Naive thymus-derived CD4-positive, alpha-beta T cell (primary cell): ENCODE measurements at regions of chr9 and their contacts with region 1.

Region 1: DNA sequence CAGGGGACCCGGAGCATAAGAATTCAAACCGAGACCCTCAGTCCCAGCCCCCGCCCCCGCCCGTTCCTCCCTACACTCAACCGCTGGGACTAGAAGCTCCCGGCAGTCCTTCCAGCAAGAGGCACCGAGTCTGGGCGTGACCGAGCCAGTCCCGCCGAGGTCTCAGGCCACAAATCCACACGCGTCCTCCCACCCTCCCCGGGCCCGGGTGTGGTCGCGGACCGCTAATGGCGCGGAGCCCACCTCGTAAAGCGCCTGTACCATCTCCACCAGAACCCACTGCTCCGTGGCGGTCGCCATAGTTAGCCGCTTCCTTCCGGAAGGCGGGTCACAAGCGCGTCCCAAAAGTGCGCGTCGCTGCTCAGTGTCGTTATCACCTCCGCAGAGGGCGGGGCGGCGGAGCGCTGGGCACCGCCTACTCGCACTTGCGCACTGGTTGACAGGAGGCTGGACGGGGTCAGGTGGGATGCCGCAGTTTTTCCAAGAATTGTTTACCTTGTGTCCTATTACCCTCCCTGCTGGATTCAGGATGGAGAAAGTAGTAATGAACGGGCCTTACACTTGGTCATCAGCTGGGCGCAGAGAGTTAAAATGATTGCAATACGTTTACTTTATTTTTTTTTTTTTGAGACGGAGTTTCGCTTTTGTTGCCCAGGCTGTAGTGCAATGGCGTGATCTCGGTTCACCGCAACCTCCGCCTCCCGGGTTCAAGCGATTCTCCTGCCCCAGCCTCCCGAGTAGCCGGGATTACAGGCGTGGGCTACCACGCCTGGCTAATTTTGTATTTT is at the start of gene SPTLC1:
- DNase-seq: peak; percentile 89 to 97 (median 94)
- ATAC-seq: peak; percentile 99
- H3K4me3 ChIP-seq: peak within 1 kb of the TSS; percentile 85
- H3K4me3 Mint-ChIP-seq: peak within 1 kb of the TSS; percentile 91 to 99 (median 97)
- H3K27ac ChIP-seq: peak within 1 kb of the TSS; percentile 96
- H3K27ac Mint-ChIP-seq: peak within 1 kb of the TSS; percentile 96 to 100 (median 98)
- H3K4me1 ChIP-seq: peaks cover 17 to 20% of the 10 kb centered on the region in 2 donors
- H3K4me1 Mint-ChIP-seq: peaks cover 17 to 51% (median 42%) of the 10 kb centered on the region in 7 donors
- H3K27me3 ChIP-seq: no peaks in the 10 kb centered on the region
- H3K27me3 Mint-ChIP-seq: peaks cover 0 to 2% (median 0%) of the 10 kb centered on the region in 5 donors
- total RNA-seq, gene SPTLC1: 45.6 to 64.0 (median 51.0) TPM

Region 2: DNA sequence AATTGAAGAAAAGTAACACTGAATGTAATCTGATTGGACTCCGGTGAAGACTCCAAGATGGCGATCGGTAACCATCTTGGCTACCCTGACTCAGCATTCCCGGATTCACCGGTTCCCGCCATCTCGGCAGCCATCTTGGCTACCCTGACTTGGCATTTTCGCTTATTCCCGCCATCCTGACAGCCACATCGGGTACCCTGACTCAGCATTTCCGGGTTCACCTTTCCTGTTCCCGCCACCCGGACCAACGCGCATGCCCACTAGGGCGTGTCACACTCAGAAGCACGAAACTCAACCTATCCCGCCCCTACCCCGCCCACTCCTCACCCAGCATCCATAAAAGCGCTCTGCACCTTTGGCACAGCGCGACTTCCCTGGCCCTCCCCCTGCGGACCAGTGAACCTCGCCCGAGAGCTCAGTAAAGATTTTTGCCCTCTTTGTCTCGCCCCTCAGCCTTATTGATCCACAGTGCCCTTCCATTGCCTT is 17.2 kb before region 1 on chr9:
- CTCF ChIA-PET with region 1: interaction called, 8 read pairs
- POLR2A ChIA-PET with region 1: interaction called, 3 read pairs
- intact Hi-C with region 1: loop called in 1 of 2 experiments (anchors 2 kb)
- DNase-seq: peak in 8 of 9 donors; percentile 4 to 64 (median 24)
- ATAC-seq: peak; percentile 52
- H3K4me3 ChIP-seq: no peak overlapping the region
- H3K4me3 Mint-ChIP-seq: peak overlapping the region; percentile 19 to 82 (median 50)
- H3K27ac ChIP-seq: no peak overlapping the region
- H3K27ac Mint-ChIP-seq: peak overlapping the region in 6 of 9 donors; percentile 26 to 82 (median 44)
- H3K4me1 ChIP-seq: no peaks in the 10 kb centered on the region
- H3K4me1 Mint-ChIP-seq: peaks cover 17 to 66% (median 64%) of the 10 kb centered on the region in 7 donors
- H3K27me3 ChIP-seq: no peaks in the 10 kb centered on the region
- H3K27me3 Mint-ChIP-seq: no peaks in the 10 kb centered on the region

Region 3: DNA sequence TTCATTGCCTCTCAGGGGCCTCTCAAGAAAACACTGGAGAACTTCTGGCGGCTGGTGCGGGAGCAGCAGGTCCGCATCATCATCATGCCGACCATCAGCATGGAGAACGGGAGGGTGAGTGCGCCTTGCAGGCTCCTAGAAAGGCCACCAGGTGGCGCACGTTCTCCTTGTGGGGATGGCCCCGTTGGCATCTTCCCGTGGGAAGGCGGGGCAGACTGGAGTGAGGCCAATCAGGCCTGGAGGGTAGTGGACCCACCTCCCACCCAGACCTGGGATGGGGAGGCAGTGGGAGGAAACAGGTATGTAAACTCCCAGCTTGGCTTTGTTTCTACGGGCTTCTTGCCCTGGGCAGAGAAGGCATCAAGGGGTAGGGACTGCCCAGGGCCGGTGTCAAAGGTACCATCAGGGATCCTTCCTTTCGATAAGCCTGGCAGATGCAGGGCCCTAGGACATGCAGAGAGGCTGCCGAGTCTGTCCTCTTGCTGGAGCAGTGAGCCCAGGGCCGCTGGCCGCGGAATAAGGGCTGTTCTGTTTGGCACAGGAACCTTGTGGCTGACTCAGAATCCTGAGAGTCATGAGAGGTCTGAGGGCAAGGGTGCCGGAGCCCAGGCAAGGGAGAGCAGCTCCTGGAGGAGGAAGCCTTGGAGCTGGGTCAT is 18.8 kb after region 1 on chr9:
- CTCF ChIA-PET with region 1: no interaction called
- POLR2A ChIA-PET with region 1: no interaction called
- intact Hi-C with region 1: loop called in 1 of 2 experiments (anchors 1 kb)
- DNase-seq: peak; percentile 42 to 79 (median 57)
- ATAC-seq: peak; percentile 85
- H3K4me3 ChIP-seq: no peak overlapping the region
- H3K4me3 Mint-ChIP-seq: peak overlapping the region in 8 of 10 donors; percentile 2 to 66 (median 45)
- H3K27ac ChIP-seq: no peak overlapping the region
- H3K27ac Mint-ChIP-seq: no peak overlapping the region
- H3K4me1 ChIP-seq: peaks cover 4 to 6% of the 10 kb centered on the region in 2 donors
- H3K4me1 Mint-ChIP-seq: peaks cover 0 to 15% (median 7%) of the 10 kb centered on the region in 7 donors
- H3K27me3 ChIP-seq: no peaks in the 10 kb centered on the region
- H3K27me3 Mint-ChIP-seq: peaks cover 23 to 36% (median 27%) of the 10 kb centered on the region in 5 donors

Region 4: GRCh38 chr9:92293452-92294296 is 178.4 kb after region 1 on chr9 and contains the start of gene IARS1:
- CTCF ChIA-PET with region 1: no interaction called
- POLR2A ChIA-PET with region 1: interaction called, 3 read pairs
- intact Hi-C with region 1: loop called (anchors 1 to 10 kb)
- DNase-seq: peak; percentile 97 to 100 (median 100)
- ATAC-seq: peak; percentile 98
- H3K4me3 ChIP-seq: peak within 1 kb of the TSS; percentile 61
- H3K4me3 Mint-ChIP-seq: peak within 1 kb of the TSS; percentile 85 to 99 (median 98)
- H3K27ac ChIP-seq: peak within 1 kb of the TSS; percentile 78
- H3K27ac Mint-ChIP-seq: peak within 1 kb of the TSS; percentile 95 to 100 (median 98)
- H3K4me1 ChIP-seq: peaks cover 17 to 33% of the 10 kb centered on the region in 2 donors
- H3K4me1 Mint-ChIP-seq: peaks cover 23 to 68% (median 62%) of the 10 kb centered on the region in 7 donors
- H3K27me3 ChIP-seq: no peaks in the 10 kb centered on the region
- H3K27me3 Mint-ChIP-seq: no peaks in the 10 kb centered on the region
- total RNA-seq, gene IARS1: 52.4 to 145 (median 97.7) TPM

Region 5: DNA sequence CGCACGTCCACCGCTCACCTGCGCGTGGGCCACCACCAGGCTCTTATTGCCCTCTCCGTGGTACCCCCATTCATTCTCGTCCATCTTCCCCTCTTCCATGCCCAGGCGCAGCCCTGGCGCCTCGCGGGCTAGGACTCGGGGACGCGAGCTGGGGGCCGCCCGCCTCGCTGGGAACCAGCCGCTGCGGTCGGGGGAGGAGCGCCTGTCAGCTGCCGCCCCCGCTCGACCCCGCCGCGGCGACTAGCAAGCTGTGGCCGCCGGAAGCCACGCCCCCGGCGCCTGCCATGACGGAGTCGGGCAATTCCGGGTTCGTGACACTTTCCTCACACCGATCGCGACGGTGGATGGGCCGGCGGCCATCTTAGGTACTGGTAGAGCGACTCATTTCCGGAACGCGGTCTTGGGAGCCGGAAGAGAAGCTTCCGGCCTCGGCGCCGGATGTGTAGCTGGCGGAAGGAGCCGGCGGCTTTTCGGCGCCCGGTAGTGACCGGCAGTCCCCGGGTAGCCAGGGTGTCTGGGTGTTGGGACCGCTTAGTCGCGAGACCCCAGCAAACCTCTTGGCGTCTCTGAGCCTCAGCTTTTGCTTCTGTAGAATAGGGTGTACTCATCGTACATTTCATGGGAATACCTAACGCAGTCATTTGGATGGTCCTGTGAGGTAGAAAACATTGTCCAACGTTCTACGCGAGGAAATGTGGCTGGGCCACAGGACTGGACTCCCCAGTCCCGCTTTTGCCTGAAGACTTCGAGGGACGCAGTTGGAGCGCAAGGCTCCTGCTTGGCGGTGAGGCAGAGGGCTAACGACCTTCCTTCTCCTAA is 554.8 kb after region 1 on chr9 and contains the start of gene IPPK:
- CTCF ChIA-PET with region 1: no interaction called
- POLR2A ChIA-PET with region 1: interaction called, 5 read pairs
- intact Hi-C with region 1: loop called in 1 of 2 experiments (anchors 1 kb)
- DNase-seq: peak; percentile 92 to 99 (median 96)
- ATAC-seq: peak; percentile 98
- H3K4me3 ChIP-seq: peak within 1 kb of the TSS; percentile 100
- H3K4me3 Mint-ChIP-seq: peak within 1 kb of the TSS; percentile 83 to 98 (median 95)
- H3K27ac ChIP-seq: peak within 1 kb of the TSS; percentile 91
- H3K27ac Mint-ChIP-seq: peak within 1 kb of the TSS; percentile 90 to 98 (median 95)
- H3K4me1 ChIP-seq: peaks cover 16 to 23% of the 10 kb centered on the region in 2 donors
- H3K4me1 Mint-ChIP-seq: peaks cover 27 to 46% (median 36%) of the 10 kb centered on the region in 7 donors
- H3K27me3 ChIP-seq: no peaks in the 10 kb centered on the region
- H3K27me3 Mint-ChIP-seq: no peaks in the 10 kb centered on the region
- total RNA-seq, gene IPPK: 5.9 to 12.8 (median 7.4) TPM